HepG2 (cell line): ENCODE measurements at regions of chr17 and their contacts with region 1.

Region 1: DNA sequence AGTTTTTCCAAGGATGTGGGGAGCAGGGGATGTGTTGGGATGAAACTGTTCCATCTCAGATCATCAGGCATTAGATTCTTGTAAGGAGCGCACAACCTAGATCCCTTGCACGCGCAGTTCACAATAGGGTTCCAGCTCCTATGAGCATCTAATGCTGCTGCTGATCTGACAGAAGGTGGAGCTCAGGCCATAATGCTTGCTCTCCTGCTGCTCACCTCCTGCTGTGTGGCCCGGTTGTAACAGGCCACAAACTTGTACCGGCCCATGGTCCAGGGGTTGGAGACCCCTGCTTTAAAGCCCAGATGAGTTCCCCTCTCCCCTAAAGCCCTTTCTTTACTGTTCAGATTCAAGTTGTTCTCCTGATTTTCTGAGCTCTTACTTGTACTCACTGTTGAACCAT is 44.8 kb downstream of the RNF135 start:
- DNase-seq: no peak
- ATAC-seq: peak; percentile 57; the same call in 1 of the 3 replicates
- H3K4me3 ChIP-seq: no peak overlapping the region
- H3K27ac ChIP-seq: no peak overlapping the region
- H3K4me1 ChIP-seq: no peaks in the 10 kb centered on the region
- H3K27me3 ChIP-seq: no peaks in the 10 kb centered on the region
- CTCF ChIP-seq: peak; percentile 67
- EP300 ChIP-seq: no peak
- POLR2A ChIP-seq: no peak
- RAD21 ChIP-seq: no peak

Region 2: GRCh38 chr17:30992551-30992950 is 23.1 kb before region 1 on chr17:
- CTCF ChIA-PET with region 1: no interaction called
- POLR2A ChIA-PET with region 1: no interaction called
- in situ Hi-C with region 1: no loop called
- intact Hi-C with region 1: no loop called
- DNase-seq: no peak
- ATAC-seq: no peak
- H3K4me3 ChIP-seq: no peak overlapping the region
- H3K27ac ChIP-seq: no peak overlapping the region
- H3K4me1 ChIP-seq: peaks cover 7% of the 10 kb centered on the region
- H3K27me3 ChIP-seq: no peaks in the 10 kb centered on the region
- CTCF ChIP-seq: no peak
- EP300 ChIP-seq: no peak
- POLR2A ChIP-seq: no peak
- RAD21 ChIP-seq: no peak

Region 3: GRCh38 chr17:31068291-31068690 is 52.7 kb after region 1 on chr17:
- CTCF ChIA-PET with region 1: no interaction called
- POLR2A ChIA-PET with region 1: no interaction called
- in situ Hi-C with region 1: no loop called
- intact Hi-C with region 1: loop called (anchors 5 kb)
- DNase-seq: peak; percentile 37
- ATAC-seq: peak; percentile 77
- H3K4me3 ChIP-seq: no peak overlapping the region
- H3K27ac ChIP-seq: no peak overlapping the region
- H3K4me1 ChIP-seq: peaks cover 15% of the 10 kb centered on the region
- H3K27me3 ChIP-seq: no peaks in the 10 kb centered on the region
- CTCF ChIP-seq: peak; percentile 67
- EP300 ChIP-seq: no peak
- POLR2A ChIP-seq: no peak
- RAD21 ChIP-seq: 0 out of 2 replicates have a peak, but pooled peaks have one; percentile 23

Region 4: GRCh38 chr17:31369266-31369665 is 353.6 kb after region 1 on chr17:
- CTCF ChIA-PET with region 1: interaction called, 3 read pairs
- POLR2A ChIA-PET with region 1: no interaction called
- in situ Hi-C with region 1: loop called (anchors 10 kb)
- intact Hi-C with region 1: no loop called
- DNase-seq: no peak
- ATAC-seq: no peak
- H3K4me3 ChIP-seq: no peak overlapping the region
- H3K27ac ChIP-seq: no peak overlapping the region
- H3K4me1 ChIP-seq: no peaks in the 10 kb centered on the region
- H3K27me3 ChIP-seq: no peaks in the 10 kb centered on the region
- CTCF ChIP-seq: no peak
- EP300 ChIP-seq: no peak
- POLR2A ChIP-seq: no peak
- RAD21 ChIP-seq: no peak